ENCODE measurements at regions of chr3 and their contacts with region 1.

Region 1: GRCh38 chr3:18809640-18810305 is 338.5 kb upstream of the KCNH8 start:
- DNase-seq: no peak
- H3K4me3 Mint-ChIP-seq: no peak overlapping the region
- H3K27ac Mint-ChIP-seq: peak overlapping the region; percentile 71
- H3K4me1 Mint-ChIP-seq: peaks cover 33% of the 10 kb centered on the region
- H3K27me3 Mint-ChIP-seq: no peaks in the 10 kb centered on the region

Region 2: DNA sequence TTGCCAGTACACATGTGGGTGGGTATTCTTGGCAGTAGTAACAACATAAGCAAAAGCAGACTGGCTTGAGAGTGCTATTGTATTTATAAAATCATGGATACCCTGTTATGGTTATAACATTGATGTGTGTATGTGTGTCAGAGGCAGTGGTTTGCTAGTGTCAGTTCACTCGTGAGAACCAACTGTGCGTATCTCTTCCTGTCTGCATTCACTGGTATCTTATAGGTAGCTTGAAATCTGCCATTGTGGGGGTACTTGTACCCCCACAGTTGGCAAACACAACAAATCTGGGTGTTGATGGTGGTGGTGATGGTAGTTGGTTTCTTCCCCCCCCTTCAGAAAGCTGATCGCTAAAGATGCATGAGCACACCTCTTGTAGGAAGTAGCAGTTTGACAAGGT is 28.8 kb before region 1 on chr3:
- CTCF ChIA-PET with region 1: no interaction called
- intact Hi-C with region 1: loop called (anchors 2 kb)
- DNase-seq: no peak
- H3K4me3 Mint-ChIP-seq: peak overlapping the region; percentile 74
- H3K27ac Mint-ChIP-seq: peak overlapping the region; percentile 77
- H3K4me1 Mint-ChIP-seq: peaks cover 43% of the 10 kb centered on the region
- H3K27me3 Mint-ChIP-seq: no peaks in the 10 kb centered on the region

Measured in activated naive CD4-positive, alpha-beta T cell treated with anti-CD3 and anti-CD28 coated beads for 36 hours (primary cell).